Breast epithelium (tissue), 4 donors: ENCODE measurements at regions of chr7 and their contacts with region 1.

Region 1: DNA sequence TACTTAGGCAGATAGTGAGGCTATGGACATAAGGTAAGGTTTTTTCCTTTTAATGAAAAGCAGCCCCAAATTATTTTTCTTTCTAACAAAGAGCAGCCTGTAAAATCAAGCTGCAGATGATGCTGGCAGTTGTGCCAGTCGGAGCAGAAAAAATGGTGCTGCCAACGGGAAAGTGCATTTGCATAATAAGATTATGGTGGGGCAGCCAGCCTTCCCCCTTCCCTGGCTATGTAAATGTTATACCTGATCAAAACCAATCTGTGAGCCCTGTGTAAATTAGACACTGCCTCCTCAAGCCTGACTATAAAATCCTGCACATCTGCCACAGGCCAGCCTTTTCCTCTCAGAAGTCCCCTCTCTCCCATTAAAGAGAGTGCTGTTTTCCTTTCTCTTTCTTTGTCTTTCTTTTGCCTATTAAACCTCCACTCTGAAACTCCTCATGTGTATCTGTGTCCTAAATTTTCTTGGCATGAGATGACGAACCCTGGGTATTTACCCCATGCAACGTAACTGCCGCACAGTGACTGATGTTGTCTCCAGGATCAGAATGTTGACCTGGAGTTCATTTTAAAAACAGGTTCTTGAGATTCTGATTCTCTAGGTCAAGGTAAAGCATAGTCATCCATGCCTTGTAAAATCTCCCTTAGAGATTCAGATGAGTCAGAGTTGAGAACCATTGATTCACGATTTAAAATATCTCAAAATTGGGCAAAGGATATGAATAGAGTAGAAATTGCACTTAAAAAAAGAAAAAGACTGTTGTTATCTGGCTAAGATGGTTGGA is 167.3 kb upstream of the C1GALT1 start:
- DNase-seq: no peak
- H3K4me3 ChIP-seq: no peak overlapping the region
- H3K27ac ChIP-seq: no peak overlapping the region
- H3K4me1 ChIP-seq: no peaks in the 10 kb centered on the region
- H3K27me3 ChIP-seq: peaks cover 0 to 6% of the 10 kb centered on the region in 2 donors
- CTCF ChIP-seq: no peak
- POLR2A ChIP-seq: no peak

Region 2: DNA sequence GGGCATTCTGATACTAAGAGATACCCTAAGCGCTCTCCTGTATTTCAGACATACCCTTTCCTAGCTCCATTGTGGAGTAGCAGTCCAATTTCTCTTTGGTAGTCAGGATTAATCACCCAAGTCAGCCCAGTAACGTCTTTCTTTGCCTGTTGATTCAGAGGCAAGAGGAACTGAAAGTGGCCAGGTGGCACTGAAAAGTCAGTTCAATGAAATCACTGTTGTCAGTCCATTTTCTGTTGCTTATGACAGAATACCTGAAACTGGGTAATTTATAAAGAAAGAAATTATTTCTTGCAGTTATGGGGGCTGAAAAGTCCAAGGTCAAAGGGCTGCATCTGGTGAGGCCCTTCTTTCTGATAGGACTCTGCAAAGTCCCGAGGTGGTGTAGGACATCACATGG is 943.6 kb before region 1 on chr7:
- intact Hi-C with region 1: no loop called
- DNase-seq: no peak
- H3K4me3 ChIP-seq: no peak overlapping the region
- H3K27ac ChIP-seq: no peak overlapping the region
- H3K4me1 ChIP-seq: no peaks in the 10 kb centered on the region
- H3K27me3 ChIP-seq: no peaks in the 10 kb centered on the region
- CTCF ChIP-seq: no peak
- POLR2A ChIP-seq: no peak

Region 3: DNA sequence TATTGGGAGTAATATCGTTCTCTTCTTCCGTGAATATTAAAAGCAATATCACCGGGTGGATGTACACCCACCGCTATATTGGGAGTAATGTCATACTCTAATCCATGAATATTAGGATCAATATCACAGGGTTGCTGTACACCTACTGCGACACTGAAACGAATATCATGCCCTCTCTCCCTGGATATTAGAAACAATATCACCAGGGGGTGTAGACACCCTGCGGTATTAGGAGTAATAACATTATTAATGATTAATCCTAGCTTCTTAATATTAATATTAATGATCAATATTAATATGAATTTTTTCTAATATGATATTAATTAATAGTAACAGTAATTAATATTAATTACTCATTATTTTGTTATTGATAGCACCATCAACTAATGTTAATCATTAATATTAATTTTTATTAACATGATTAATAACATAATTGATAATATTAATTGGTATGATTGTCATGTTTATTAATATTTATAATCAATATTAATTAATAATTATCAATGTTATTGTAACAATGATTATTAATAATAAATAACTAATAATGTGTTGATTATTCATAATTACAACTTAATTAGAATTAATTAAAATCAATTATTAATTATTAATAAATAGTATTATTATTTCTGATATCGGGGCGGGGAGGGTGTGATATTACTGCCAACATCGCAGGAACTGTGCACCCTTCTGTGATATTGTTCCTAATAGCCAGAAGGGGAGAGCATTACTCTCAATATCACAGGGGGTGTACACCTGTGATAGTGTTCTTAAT is 46.0 kb after region 1 on chr7:
- intact Hi-C with region 1: loop called (anchors 2 kb)
- DNase-seq: no peak
- H3K4me3 ChIP-seq: no peak overlapping the region
- H3K27ac ChIP-seq: no peak overlapping the region
- H3K4me1 ChIP-seq: no peaks in the 10 kb centered on the region
- H3K27me3 ChIP-seq: no peaks in the 10 kb centered on the region
- CTCF ChIP-seq: no peak
- POLR2A ChIP-seq: no peak

Region 4: GRCh38 chr7:7808156-7808555 is 793.1 kb after region 1 on chr7:
- intact Hi-C with region 1: no loop called
- DNase-seq: no peak
- H3K4me3 ChIP-seq: no peak overlapping the region
- H3K27ac ChIP-seq: no peak overlapping the region
- H3K4me1 ChIP-seq: no peaks in the 10 kb centered on the region
- H3K27me3 ChIP-seq: no peaks in the 10 kb centered on the region
- CTCF ChIP-seq: no peak
- POLR2A ChIP-seq: no peak